ENCODE measurements at regions of chr17 and their contacts with region 1.

Region 1: DNA sequence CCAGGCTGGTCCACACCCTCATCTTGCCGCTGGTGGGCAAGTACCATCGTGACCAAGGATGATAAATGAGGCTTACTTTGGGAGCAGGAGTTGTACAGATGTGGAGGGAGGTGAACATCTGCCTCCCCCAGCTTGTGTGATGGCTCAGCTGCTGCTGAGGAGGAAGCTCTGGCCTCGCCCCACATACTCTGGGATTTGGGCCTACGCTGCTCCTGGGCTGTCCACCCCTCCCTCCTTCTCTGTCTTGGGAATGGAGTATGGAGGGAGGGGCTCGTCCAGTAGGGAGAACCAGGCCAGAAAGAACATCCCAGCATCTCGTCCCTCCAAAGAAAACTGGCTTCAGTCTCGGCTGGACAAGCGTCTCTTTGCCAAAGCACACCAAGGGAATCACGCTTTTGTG is 134.8 kb upstream of the CDC42EP4 start:
- DNase-seq: no peak
- ATAC-seq: no peak

Region 2: GRCh38 chr17:72725433-72726068 is 721.1 kb before region 1 on chr17:
- intact Hi-C with region 1: no loop called
- DNase-seq: peak; percentile 52
- ATAC-seq: peak; percentile 77 to 80

Region 3: GRCh38 chr17:73947966-73948355 is 501.3 kb after region 1 on chr17:
- intact Hi-C with region 1: loop called in 1 of 2 experiments (anchors 10 kb)
- DNase-seq: no peak
- ATAC-seq: no peak